KBM-7 (cell line): ENCODE measurements at regions of chr5 and their contacts with region 1.

Region 1: GRCh38 chr5:172479044-172479783 is 24.9 kb upstream of the SH3PXD2B start:
- DNase-seq: peak; percentile 88

Region 2: DNA sequence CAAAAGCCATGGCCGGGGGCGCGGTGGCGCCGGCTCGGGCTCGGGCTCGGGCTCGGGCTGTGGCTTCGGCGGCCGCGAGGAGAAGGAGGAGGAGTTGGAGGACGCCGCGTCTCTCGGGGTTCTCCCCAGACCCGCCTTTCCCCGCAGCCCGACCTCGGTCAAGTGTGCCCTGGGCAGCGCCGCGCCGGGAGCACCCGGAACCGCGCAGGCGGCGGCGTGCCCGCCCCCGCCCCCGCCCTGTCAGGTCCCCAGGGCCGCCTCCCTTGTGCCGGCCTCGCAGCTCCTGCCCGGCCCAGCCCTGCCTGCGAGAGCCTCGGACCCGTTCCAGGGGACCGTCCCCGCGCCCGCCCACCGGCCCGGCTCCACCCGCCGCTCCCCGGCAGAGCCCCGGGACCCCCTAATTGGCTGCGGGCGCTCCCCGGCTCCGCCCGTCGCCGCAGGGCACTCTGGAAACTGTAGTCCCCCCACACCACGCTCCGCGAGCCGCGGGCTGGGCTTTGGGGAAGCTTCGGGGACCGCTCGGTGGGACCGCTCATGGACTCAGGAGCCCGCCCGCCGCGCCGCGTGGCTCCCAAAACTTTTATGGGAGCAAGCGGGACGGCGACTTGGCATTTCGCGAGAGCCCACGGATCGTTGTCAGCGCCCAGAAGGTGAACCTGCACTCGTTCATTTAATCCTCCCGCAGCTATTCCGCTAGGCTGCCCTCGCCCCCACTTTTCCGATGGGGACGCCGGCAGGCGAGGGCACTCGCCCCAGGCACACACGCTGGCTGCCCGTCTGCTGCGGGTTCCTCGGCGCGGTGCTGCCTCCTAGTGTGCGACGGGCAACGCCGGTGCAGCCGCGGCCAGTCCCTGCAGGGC is 291.0 kb before region 1 on chr5 and contains the start of gene STK10:
- in situ Hi-C with region 1: no loop called
- DNase-seq: peak; percentile 95

Region 3: DNA sequence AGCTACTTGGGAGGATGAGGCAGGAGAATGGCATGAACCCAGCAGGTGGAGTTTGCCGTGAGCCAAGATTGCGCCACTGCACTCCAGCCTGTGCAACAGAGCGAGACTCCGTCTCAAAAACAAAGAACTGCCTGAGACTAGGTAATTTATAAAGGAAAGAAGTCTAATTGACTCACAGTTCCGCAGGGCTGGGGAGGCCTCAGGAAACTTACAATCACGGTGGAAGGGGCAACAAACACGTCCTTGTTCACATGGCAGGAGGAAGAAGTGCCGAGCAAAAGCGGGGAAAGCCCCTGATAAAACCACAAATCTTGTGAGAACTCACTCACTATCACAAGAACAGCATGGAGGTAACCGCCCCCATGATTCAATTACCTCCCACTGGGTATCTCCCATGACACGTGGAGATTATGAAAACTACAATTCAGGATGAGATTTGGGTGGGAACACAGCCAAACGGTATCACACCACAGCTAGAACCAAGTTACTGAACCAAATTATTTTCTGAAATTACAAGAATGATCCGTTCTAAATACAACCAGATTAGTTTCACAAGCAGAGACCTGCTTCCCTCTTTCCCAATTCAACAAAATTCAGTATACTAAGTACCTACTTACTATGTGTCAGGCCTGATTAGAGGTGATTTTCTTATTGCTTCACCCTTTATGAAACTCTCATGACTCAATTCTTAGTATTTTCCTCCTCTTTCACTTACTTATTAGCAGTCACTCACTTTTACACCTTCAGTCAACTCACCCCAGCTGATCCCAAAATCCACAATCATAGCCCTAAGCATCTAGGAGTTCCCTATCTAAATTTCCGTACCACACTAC is 204.1 kb before region 1 on chr5:
- in situ Hi-C with region 1: no loop called
- DNase-seq: peak; percentile 67

Region 4: DNA sequence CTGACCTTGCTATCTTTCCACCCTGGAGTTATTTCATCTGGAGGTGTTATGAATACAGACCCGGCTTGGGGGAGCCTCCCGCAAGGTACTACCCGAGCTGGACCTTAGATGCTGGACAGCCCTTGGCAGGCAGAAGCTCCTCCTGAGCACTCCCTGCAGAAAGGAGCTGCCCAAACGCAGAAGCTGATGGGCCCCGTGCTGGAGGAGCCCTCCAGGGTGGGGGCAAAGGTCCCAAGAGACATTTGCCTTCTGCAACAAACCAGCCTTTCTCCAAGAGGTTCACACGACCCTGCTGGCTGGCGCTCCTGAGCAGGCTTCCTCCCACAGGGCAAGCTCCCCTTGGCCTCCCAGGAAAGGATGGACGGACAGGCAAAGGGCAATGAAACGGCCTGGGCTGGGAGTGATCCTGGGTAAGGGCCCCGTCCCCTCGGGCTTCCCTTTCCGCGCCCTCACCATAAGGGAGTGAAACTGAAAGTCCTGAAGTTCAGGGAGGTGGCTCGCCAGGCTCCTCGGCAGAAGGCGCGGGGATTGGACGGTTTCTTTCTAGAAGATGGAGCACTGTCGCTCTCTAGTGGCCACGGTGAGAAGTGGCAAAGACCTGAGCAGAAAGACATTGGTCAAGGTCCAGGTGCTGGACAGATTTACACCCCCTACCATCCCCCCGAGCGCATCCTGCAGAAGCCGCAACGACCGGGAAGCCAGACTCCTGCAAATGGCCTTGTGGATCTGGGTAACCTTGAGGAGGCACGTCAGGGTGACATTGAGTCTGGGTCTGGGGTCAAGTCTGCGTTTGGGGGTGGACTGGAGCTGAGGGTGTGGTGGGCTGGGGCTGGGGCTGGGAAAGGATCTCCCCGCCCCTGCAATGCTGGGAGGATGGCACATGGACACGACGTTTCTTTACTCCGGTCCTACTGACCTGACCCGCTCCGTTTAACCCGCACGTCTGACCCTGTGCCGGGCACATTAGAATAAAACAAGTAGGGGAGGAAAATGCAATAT is 218.2 kb after region 1 on chr5:
- in situ Hi-C with region 1: loop called (anchors 10 kb)
- DNase-seq: peak; percentile 80

Region 5: GRCh38 chr5:172758083-172758833 is 279.0 kb after region 1 on chr5:
- in situ Hi-C with region 1: no loop called
- DNase-seq: no peak

Region 6: DNA sequence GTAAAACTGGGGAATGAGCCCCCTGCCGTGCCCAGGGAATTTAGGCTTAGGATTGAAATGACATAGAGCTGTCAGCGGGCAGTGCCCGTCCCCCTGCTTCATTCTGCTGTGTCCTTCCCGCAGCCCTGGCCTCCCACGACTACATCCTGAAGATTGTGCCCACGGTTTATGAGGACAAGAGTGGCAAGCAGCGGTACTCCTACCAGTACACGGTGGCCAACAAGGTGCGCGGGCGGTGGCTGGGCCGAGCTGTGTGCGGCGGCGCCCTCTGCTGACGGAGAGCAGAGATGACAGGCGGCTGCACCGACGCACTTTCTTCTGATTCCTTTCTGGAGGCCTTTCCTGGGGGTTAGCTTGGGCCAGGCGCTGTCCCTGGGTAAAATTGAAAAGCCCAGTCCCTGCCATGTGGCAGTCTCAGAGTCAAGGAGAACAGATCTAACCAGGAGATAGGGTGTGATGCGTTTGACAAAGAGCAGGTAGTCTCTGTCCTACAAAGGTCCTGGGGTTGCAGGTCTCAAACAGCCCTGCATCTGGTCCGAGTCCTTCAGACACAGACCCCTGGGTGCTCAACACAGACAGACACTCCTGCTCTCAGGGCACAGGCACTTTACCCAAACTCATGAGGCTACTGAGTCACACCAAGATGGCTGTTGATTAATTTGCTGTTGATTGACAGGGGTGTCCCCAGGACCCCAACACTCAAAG is 453.3 kb after region 1 on chr5:
- in situ Hi-C with region 1: loop called (anchors 25 kb)
- DNase-seq: peak; percentile 77